T-cell (primary cell): ENCODE measurements at regions of chr3 and their contacts with region 1.

Region 1: GRCh38 chr3:50192689-50193141 is 1.3 kb downstream of the GNAT1 start:
- DNase-seq: peak; percentile 58 to 90 (median 79)
- ATAC-seq: peak; percentile 23 to 54 (median 46)
- H3K4me3 ChIP-seq: no peak overlapping the region
- H3K4me3 Mint-ChIP-seq: peak overlapping the region in 1 of 3 donors; percentile 64
- H3K27ac ChIP-seq: no peak overlapping the region
- H3K27ac Mint-ChIP-seq: peak overlapping the region in 1 of 2 donors; percentile 39
- H3K4me1 ChIP-seq: peaks cover 0 to 24% of the 10 kb centered on the region in 2 experiments
- H3K4me1 Mint-ChIP-seq: peaks cover 4 to 14% (median 12%) of the 10 kb centered on the region in 3 donors
- H3K27me3 ChIP-seq: peaks cover 2 to 52% of the 10 kb centered on the region in 2 experiments
- H3K27me3 Mint-ChIP-seq: peaks cover 7 to 10% of the 10 kb centered on the region in 2 donors

Region 2: DNA sequence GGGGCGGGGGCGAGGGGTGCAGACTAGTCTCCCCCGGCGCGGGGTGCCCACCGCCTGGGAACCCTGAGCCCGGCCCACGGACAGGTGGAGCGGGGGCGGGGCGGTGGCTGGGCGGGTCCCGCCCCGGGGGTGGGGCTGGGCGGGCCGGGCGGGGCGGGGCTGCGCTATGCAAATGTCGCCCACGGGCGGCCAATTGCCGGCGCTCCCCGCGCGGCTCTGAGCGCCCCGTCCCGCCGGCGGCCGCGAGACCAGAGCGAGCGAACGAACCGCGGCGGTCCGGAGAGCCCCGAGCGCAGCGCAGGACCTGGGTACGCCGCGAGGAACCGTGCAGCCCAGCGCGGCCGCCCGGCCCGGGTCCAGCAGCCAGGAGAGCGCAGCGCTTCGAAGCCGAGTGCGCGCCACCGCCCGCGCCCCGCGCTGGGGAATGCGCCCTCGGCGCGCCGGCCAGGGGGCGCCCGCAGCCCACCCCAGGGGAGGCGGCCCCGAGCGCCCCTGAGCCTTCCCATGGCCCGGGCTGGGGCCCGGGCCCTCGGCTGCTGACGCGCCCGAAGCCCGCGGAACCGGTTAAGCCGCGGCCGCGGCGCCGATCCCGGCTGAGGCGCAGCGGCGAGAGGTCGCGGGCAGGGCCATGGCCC is 37.8 kb before region 1 on chr3 and contains the start of gene SEMA3F:
- CTCF ChIA-PET with region 1: no interaction called
- POLR2A ChIA-PET with region 1: no interaction called
- DNase-seq: peak in 34 of 35 experiments; percentile 2 to 83 (median 56)
- ATAC-seq: peak; percentile 90 to 93 (median 91)
- H3K4me3 ChIP-seq: peak within 1 kb of the TSS in 1 of 2 donors; percentile 60
- H3K4me3 Mint-ChIP-seq: peak within 1 kb of the TSS; percentile 77 to 88 (median 82)
- H3K27ac ChIP-seq: no peak within 1 kb of the TSS
- H3K27ac Mint-ChIP-seq: no peak within 1 kb of the TSS
- H3K4me1 ChIP-seq: peaks cover 0 to 21% of the 10 kb centered on the region in 2 experiments
- H3K4me1 Mint-ChIP-seq: peaks cover 9 to 16% (median 12%) of the 10 kb centered on the region in 3 donors
- H3K27me3 ChIP-seq: peaks cover 0 to 62% of the 10 kb centered on the region in 2 experiments
- H3K27me3 Mint-ChIP-seq: peaks cover 26 to 36% of the 10 kb centered on the region in 2 donors
- total RNA-seq, gene SEMA3F: 0.32 to 0.46 (median 0.36) TPM in 4 of 5 donors, not detected in the other

Region 3: GRCh38 chr3:50218448-50218847 is 25.7 kb after region 1 on chr3:
- CTCF ChIA-PET with region 1: interaction called, 10 to 60 read pairs
- POLR2A ChIA-PET with region 1: no interaction called
- DNase-seq: no peak
- ATAC-seq: no peak
- H3K4me3 ChIP-seq: no peak overlapping the region
- H3K4me3 Mint-ChIP-seq: no peak overlapping the region
- H3K27ac ChIP-seq: no peak overlapping the region
- H3K27ac Mint-ChIP-seq: no peak overlapping the region
- H3K4me1 ChIP-seq: peaks cover 0 to 14% of the 10 kb centered on the region in 2 experiments
- H3K4me1 Mint-ChIP-seq: no peaks in the 10 kb centered on the region
- H3K27me3 ChIP-seq: peaks cover 0 to 26% of the 10 kb centered on the region in 2 experiments
- H3K27me3 Mint-ChIP-seq: no peaks in the 10 kb centered on the region

Region 4: GRCh38 chr3:50227390-50228183 is 34.9 kb after region 1 on chr3:
- CTCF ChIA-PET with region 1: interaction called, 11 to 60 read pairs
- POLR2A ChIA-PET with region 1: no interaction called
- DNase-seq: peak; percentile 79 to 95 (median 87)
- ATAC-seq: peak; percentile 85 to 87 (median 87)
- H3K4me3 ChIP-seq: peak overlapping the region; percentile 67 to 95
- H3K4me3 Mint-ChIP-seq: peak overlapping the region; percentile 89 to 93 (median 92)
- H3K27ac ChIP-seq: peak overlapping the region; percentile 55
- H3K27ac Mint-ChIP-seq: peak overlapping the region; percentile 84 to 88
- H3K4me1 ChIP-seq: peaks cover 0 to 32% of the 10 kb centered on the region in 2 experiments
- H3K4me1 Mint-ChIP-seq: peaks cover 19 to 29% (median 27%) of the 10 kb centered on the region in 3 donors
- H3K27me3 ChIP-seq: peaks cover 0 to 6% of the 10 kb centered on the region in 2 experiments
- H3K27me3 Mint-ChIP-seq: peaks cover 0 to 3% of the 10 kb centered on the region in 2 donors

Region 5: DNA sequence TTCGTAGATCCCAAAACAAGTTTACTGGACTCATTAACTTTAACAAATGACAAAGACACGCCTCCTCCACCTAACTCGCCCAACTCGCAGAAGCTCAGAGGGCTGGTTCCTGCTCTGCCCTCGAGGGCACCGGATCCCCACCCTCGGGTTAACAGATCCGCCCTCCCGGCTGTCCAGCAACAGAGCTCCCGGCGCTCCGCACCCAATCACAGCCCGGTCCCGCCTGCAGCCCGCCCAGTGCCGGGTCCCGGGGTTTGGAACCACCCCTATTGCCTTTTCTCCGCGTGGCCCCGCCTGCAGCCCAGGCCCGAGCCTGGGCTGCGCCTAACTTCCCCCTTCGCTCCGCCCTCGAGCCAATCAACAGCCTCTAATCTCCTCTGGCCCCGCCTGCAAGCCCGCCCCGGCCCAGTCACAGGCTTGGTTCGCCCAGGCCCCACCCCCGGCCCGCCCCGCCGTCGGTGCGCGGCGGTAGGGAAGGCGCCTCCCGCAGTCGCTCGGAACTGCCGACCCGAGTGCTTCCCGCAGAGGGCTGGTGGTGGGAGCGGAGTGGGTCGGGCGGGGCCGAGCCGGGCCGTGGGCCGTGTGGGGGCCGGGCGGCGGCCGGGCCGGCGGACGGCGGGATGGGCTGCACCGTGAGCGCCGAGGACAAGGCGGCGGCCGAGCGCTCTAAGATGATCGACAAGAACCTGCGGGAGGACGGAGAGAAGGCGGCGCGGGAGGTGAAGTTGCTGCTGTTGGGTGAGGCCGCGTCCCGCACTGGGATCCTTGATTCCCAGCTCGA is 43.2 kb after region 1 on chr3 and contains the start of gene GNAI2:
- CTCF ChIA-PET with region 1: interaction called in 1 of 2 experiments, 13 read pairs
- POLR2A ChIA-PET with region 1: interaction called in 1 of 2 experiments, 4 read pairs
- DNase-seq: peak; percentile 96 to 100 (median 99)
- ATAC-seq: peak; percentile 85 to 90 (median 88)
- H3K4me3 ChIP-seq: peak within 1 kb of the TSS; percentile 98 to 99
- H3K4me3 Mint-ChIP-seq: peak within 1 kb of the TSS; percentile 95 to 98 (median 97)
- H3K27ac ChIP-seq: peak within 1 kb of the TSS; percentile 82
- H3K27ac Mint-ChIP-seq: peak within 1 kb of the TSS; percentile 95 to 96
- H3K4me1 ChIP-seq: peaks cover 24 to 50% of the 10 kb centered on the region in 2 experiments
- H3K4me1 Mint-ChIP-seq: peaks cover 34 to 54% (median 39%) of the 10 kb centered on the region in 3 donors
- H3K27me3 ChIP-seq: no peaks in the 10 kb centered on the region
- H3K27me3 Mint-ChIP-seq: no peaks in the 10 kb centered on the region
- total RNA-seq, gene GNAI2: 257 to 313 (median 287) TPM